Prostate gland (tissue), 2 donors: ENCODE measurements at regions of chr5 and their contacts with region 1.

Region 1: GRCh38 chr5:74673011-74673790 is 11.8 kb upstream of the HEXB start:
- DNase-seq: no peak
- H3K4me3 ChIP-seq: no peak overlapping the region
- H3K27ac ChIP-seq: no peak overlapping the region
- H3K4me1 ChIP-seq: no peaks in the 10 kb centered on the region
- H3K27me3 ChIP-seq: no peaks in the 10 kb centered on the region
- CTCF ChIP-seq: peak; percentile 24 to 64 (median 53)
- POLR2A ChIP-seq: no peak

Region 2: GRCh38 chr5:74310386-74310785 is 362.8 kb before region 1 on chr5:
- intact Hi-C with region 1: no loop called
- DNase-seq: no peak
- H3K4me3 ChIP-seq: no peak overlapping the region
- H3K27ac ChIP-seq: no peak overlapping the region
- H3K4me1 ChIP-seq: no peaks in the 10 kb centered on the region
- H3K27me3 ChIP-seq: no peaks in the 10 kb centered on the region
- CTCF ChIP-seq: no peak
- POLR2A ChIP-seq: no peak

Region 3: DNA sequence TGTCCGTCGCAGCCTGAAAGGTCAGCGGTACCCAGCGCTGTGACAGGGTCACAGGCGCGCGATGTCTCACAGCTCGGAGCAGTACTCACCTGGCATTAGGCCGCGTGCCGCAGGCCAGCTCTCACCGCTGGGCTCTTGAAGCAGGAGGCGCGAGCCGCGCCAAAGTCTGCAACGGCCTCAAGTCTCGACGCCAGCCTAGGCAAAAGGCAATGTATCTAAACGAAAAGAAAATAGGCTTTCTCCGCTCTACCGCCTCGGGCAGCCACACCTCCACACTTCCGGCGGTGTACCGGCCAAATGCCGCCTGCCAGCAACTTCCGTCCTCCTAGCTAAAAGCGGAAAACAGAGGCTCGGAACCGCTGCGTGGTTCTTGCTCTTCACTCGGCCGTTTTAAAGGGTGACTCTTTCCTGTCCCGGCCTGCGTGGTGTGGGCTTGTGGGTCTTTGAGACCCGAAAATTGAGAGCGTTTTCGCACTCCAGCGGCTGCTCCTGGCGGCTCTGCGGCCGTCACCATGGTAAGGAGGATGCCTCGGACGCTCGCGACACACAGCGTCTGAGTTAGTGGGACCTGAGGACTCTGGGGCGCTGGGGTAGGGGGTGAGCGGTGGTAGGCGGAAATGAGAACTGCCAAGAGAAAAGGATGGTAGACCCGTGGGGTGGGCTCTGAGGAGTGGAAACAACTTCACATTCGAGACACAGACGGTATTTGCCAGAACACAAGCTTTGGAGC is 93.8 kb after region 1 on chr5 and contains the starts of genes GFM2 and NSA2:
- intact Hi-C with region 1: loop called (anchors 5 kb)
- DNase-seq: peak; percentile 90
- H3K4me3 ChIP-seq: peak within 1 kb of the TSS; percentile 87 to 94
- H3K27ac ChIP-seq: peak within 1 kb of the TSS; percentile 80 to 81
- H3K4me1 ChIP-seq: peaks cover 5% of the 10 kb centered on the region
- H3K27me3 ChIP-seq: no peaks in the 10 kb centered on the region
- CTCF ChIP-seq: peak in 1 of 4 experiments; percentile 12
- POLR2A ChIP-seq: peak; percentile 12
- total RNA-seq, gene GFM2: 21.9 to 34.7 TPM
- total RNA-seq, gene NSA2: 59.2 to 130 TPM

Region 4: DNA sequence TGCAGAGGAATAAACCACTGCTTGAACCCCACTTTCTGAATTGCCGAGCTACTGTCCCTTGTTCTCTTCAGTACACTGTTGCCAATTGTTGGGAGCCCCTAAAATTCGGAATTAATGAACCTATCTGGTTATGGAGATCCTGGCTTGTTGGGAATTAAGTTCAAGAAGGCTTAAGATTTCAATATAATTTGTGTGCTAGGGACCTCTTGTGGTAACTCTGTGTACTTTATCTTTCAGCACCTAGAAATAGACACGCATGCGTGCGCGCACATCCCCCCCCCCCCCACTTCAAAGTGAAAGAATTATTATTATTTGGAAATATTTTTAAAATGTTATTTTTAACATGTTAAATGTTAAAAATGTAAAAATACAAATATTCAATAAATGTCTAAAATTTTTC is 246.3 kb after region 1 on chr5:
- intact Hi-C with region 1: loop called (anchors 5 kb)
- DNase-seq: peak; percentile 12
- H3K4me3 ChIP-seq: no peak overlapping the region
- H3K27ac ChIP-seq: no peak overlapping the region
- H3K4me1 ChIP-seq: no peaks in the 10 kb centered on the region
- H3K27me3 ChIP-seq: no peaks in the 10 kb centered on the region
- CTCF ChIP-seq: peak in 3 of 4 experiments; percentile 59 to 67 (median 60)
- POLR2A ChIP-seq: no peak

Region 5: GRCh38 chr5:76256116-76256889 is 1583.1 kb after region 1 on chr5:
- intact Hi-C with region 1: loop called (anchors 10 kb)
- DNase-seq: peak; percentile 70
- H3K4me3 ChIP-seq: no peak overlapping the region
- H3K27ac ChIP-seq: no peak overlapping the region
- H3K4me1 ChIP-seq: no peaks in the 10 kb centered on the region
- H3K27me3 ChIP-seq: no peaks in the 10 kb centered on the region
- CTCF ChIP-seq: peak; percentile 24 to 72 (median 44)
- POLR2A ChIP-seq: no peak